PC-9 (cell line): ENCODE measurements at regions of chr6 and their contacts with region 1.

Region 1: GRCh38 chr6:26421259-26422144 is 18.8 kb upstream of the BTN3A3 start:
- DNase-seq: peak; percentile 72 to 80
- H3K4me3 ChIP-seq: peak overlapping the region; percentile 67
- H3K27ac ChIP-seq: 0 out of 2 replicates have a peak overlapping the region, but pooled peaks have one; percentile 53
- H3K4me1 ChIP-seq: peaks cover 6% of the 10 kb centered on the region; the same call in 1 of the 2 replicates
- H3K27me3 ChIP-seq: no peaks in the 10 kb centered on the region
- CTCF ChIP-seq: no peak

Region 2: GRCh38 chr6:26329763-26330511 is 91.6 kb before region 1 on chr6:
- CTCF ChIA-PET with region 1: no interaction called
- POLR2A ChIA-PET with region 1: interaction called, 31 read pairs
- intact Hi-C with region 1: no loop called
- DNase-seq: peak; percentile 69 to 71
- H3K4me3 ChIP-seq: peak overlapping the region; percentile 85
- H3K27ac ChIP-seq: peak overlapping the region; percentile 66
- H3K4me1 ChIP-seq: peaks cover 34% of the 10 kb centered on the region; the same call in 1 of the 2 replicates
- H3K27me3 ChIP-seq: no peaks in the 10 kb centered on the region
- CTCF ChIP-seq: no peak

Region 3: DNA sequence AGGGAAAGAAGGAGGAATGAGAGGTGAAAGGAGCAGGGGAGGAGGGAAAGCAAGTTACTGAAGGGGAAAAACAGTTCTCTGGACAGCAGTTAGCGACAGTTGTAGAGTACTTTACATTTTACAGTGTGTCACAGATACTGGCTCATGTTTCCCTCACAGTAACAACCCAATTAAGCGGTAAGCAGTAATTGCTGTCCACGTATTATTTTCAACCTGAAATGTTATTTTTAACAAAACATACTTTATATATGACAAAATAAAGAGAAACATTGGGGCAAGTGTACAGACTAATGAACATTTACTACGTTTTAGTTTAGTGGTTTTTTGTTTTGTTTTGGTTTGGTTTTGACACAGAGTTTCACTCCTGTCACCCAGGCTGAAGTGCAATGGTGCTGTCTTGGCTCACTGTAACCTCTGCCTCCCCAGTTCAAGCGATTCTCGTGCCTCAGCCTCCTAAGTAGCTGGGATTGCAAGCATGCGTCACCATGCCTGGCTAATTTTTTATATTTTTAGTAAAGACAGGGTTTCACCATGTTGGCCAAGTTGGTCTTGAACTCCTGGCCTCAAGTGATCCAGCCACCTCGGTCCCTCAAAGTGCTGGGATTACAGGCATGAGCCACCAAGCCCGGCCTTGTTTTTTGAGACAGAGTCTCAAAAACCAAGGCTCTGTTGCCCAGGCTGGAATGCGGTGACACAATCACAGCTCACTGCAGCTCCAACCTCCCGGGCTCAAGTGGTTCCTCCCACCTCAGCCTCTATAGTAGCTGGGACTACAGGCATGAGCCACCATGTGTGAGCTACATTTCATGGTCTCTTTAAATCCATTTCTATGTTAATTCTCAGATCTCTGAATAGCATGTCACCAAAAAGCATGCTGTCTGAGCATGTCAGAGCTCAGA is 79.1 kb before region 1 on chr6:
- CTCF ChIA-PET with region 1: no interaction called
- POLR2A ChIA-PET with region 1: interaction called, 6 read pairs
- intact Hi-C with region 1: loop called (anchors 10 kb)
- DNase-seq: no peak
- H3K4me3 ChIP-seq: no peak overlapping the region
- H3K27ac ChIP-seq: no peak overlapping the region
- H3K4me1 ChIP-seq: peaks cover under 1% of the 10 kb centered on the region; the same call in 1 of the 2 replicates
- H3K27me3 ChIP-seq: no peaks in the 10 kb centered on the region
- CTCF ChIP-seq: no peak

Region 4: GRCh38 chr6:26383624-26384417 is 37.7 kb before region 1 on chr6:
- CTCF ChIA-PET with region 1: interaction called, 17 read pairs
- POLR2A ChIA-PET with region 1: no interaction called
- intact Hi-C with region 1: no loop called
- DNase-seq: peak; percentile 28 to 55
- H3K4me3 ChIP-seq: peak overlapping the region; percentile 65
- H3K27ac ChIP-seq: peak overlapping the region; percentile 59
- H3K4me1 ChIP-seq: peaks cover 19% of the 10 kb centered on the region
- H3K27me3 ChIP-seq: no peaks in the 10 kb centered on the region
- CTCF ChIP-seq: no peak

Region 5: DNA sequence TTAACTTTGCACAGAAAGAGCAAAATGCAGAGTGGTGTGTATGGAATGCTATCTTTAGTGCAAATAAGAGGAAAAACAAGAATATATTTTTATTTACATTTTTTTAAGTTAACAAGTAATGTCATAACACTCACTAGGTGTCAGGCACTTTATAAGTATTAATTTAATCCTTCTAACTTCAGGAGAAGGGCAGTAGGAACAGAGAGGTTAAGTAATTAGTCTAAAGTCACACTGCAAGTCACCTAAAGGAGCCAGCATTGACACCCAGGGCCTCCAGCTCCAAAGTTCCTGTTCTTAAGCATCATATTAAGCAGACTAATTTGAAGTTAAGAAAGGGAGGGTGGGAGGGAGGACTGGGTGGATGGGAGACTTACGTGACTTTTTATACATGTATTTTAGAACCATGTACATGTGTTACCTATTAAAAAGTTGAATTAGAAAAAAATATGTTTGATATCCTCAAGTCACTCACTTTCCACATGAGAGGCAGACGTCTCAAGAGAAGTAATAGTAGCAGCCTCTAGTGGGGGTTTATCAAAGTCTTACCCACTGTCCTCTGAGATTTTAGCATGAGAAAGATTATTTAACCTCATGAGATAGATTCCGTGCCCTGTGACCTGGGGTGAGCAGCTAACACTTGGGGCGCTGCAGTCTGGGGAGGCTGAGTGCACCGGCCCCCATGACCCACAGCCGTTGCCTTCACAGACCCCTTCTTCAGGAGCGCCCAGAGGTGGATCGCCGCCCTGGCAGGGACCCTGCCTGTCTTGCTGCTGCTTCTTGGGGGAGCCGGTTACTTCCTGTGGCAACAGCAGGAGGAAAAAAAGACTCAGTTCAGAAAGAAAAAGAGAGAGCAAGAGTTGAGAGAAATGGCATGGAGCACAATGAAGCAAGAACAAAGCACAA is 12.4 kb before region 1 on chr6:
- CTCF ChIA-PET with region 1: no interaction called
- POLR2A ChIA-PET with region 1: no interaction called
- intact Hi-C with region 1: no loop called
- DNase-seq: no peak
- H3K4me3 ChIP-seq: no peak overlapping the region
- H3K27ac ChIP-seq: no peak overlapping the region
- H3K4me1 ChIP-seq: no peaks in the 10 kb centered on the region
- H3K27me3 ChIP-seq: no peaks in the 10 kb centered on the region
- CTCF ChIP-seq: no peak

Region 6: DNA sequence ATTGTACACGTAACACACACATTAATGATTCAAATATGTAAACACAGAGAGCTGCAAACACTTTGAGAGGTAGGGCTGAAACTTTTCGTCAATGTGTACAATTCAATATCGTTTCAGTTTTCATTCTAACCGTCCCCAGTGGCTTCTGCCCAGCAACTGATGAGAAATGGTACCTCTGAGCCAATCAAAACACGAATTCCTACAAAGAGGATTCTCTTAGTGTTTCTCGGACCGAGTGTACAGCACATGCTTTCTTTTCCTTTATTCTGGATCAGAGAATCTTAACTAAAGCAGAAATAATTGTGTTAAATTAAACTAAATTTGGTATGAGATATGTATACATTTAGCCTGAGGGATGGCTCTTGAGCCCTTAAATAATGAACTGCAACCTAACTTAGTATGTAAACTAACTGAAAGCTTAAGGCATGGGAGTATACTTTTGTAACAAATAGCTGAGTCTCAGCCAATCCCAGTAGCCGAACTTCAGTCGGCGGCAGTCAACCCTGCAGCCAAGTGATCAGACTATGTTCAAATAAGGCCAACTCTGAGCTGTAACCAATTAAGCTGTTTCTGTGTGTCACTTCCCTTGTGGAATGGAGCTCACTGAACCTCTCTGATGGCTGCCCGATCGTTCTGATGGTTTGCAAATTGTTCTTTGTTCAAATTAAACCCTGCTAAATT is 52.4 kb after region 1 on chr6:
- CTCF ChIA-PET with region 1: no interaction called
- POLR2A ChIA-PET with region 1: no interaction called
- intact Hi-C with region 1: no loop called
- DNase-seq: peak; percentile 75 to 88
- H3K4me3 ChIP-seq: peak overlapping the region; percentile 62
- H3K27ac ChIP-seq: peak overlapping the region; percentile 76
- H3K4me1 ChIP-seq: peaks cover 29% of the 10 kb centered on the region
- H3K27me3 ChIP-seq: no peaks in the 10 kb centered on the region
- CTCF ChIP-seq: no peak

Region 7: DNA sequence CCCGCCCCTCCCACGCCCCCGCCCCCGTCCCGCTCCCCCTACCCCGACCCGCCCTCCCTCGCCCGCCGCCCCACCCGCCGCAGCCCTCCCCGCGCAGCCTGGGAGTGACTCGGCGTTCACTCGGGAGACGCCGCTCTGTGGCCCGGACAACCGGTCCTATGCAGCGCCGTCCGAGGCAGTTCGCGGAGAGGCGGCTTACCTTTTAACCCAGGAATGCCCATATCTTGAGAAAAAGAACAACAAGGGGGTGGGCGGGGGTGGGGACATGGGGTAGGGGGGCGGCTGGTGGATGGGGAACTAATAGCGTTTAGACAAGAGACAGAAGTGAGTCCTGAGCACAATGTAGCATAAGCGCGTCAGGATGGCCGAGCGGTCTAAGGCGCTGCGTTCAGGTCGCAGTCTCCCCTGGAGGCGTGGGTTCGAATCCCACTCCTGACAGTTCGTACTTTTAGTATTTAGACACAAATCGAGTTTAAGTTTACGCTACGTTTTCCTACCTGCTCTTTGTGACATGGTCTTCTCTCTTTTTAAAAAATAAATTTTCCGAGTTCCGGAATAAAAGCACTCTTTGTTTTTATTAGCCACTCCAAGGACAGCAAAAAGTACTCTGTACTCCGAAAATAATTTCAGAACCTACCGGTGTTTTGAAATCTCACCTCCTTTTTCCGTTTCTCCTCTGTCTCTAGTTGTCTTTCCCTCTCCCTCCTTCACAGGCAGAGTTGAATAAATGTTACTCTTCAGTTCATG is 99.5 kb after region 1 on chr6:
- CTCF ChIA-PET with region 1: no interaction called
- POLR2A ChIA-PET with region 1: no interaction called
- intact Hi-C with region 1: loop called (anchors 1 kb)
- DNase-seq: peak; percentile 78 to 89
- H3K4me3 ChIP-seq: peak overlapping the region; percentile 85
- H3K27ac ChIP-seq: peak overlapping the region; percentile 93
- H3K4me1 ChIP-seq: peaks cover 29% of the 10 kb centered on the region
- H3K27me3 ChIP-seq: no peaks in the 10 kb centered on the region
- CTCF ChIP-seq: no peak

Region 8: GRCh38 chr6:26550250-26550993 is 128.9 kb after region 1 on chr6:
- CTCF ChIA-PET with region 1: no interaction called
- POLR2A ChIA-PET with region 1: no interaction called
- intact Hi-C with region 1: no loop called
- DNase-seq: peak in 1 of 2 experiments; percentile 56
- H3K4me3 ChIP-seq: peak overlapping the region; percentile 59; the same call in 1 of the 2 replicates
- H3K27ac ChIP-seq: no peak overlapping the region
- H3K4me1 ChIP-seq: peaks cover 17% of the 10 kb centered on the region
- H3K27me3 ChIP-seq: no peaks in the 10 kb centered on the region
- CTCF ChIP-seq: no peak

Region 9: DNA sequence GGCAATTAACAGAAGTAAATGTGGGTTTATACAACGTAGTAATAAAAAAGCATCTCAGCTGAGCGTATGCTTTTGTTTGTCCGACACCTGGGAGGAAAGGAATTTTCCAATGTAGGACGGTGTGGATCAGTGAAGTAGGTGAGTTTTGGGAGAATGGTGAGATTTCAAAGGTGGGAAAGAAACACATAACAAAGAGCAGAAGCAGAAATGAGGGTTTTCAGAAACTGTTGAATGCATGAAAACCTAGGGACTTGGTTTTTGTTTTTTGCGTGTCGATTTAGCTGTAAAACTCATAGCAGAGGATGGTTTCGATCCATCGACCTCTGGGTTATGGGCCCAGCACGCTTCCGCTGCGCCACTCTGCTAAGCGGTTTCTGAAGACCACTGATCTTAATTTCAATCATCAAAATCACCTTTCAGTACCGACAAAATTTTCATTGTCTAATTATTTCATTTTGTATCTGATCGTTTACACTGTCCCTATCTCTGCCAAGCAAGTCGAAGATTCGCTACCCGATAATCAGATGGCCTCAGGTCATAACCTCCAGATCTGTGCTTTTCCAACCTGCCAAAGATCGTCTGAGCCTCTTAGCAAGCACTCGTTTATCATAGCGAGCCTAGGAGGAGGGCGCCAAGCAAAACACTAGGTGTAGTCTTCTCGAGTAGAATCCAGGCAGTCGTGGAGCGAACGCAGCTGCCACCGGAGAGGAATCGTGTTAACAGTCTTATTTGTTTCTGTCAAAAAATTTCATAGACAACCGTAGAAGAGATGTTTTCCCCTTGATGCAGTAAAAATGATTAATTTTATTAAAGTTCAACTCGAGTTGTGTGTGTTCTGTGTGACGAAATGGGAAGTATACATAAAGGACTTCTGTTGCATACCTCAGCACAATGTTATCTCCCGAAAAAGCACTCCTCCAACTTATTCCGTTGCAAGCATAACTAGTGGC is 911.5 kb after region 1 on chr6:
- CTCF ChIA-PET with region 1: no interaction called
- POLR2A ChIA-PET with region 1: no interaction called
- intact Hi-C with region 1: no loop called
- DNase-seq: peak; percentile 62 to 72
- H3K4me3 ChIP-seq: peak overlapping the region; percentile 82
- H3K27ac ChIP-seq: 0 out of 2 replicates have a peak overlapping the region, but pooled peaks have one; percentile 21
- H3K4me1 ChIP-seq: peaks cover 10% of the 10 kb centered on the region; the same call in 1 of the 2 replicates
- H3K27me3 ChIP-seq: no peaks in the 10 kb centered on the region
- CTCF ChIP-seq: no peak